Tibial artery (tissue), 4 donors: ENCODE measurements at regions of chr1 and their contacts with region 1.

Region 1: GRCh38 chr1:23098463-23099170 is 70.0 kb downstream of the LUZP1 start:
- DNase-seq: peak; percentile 49 to 72
- H3K4me3 ChIP-seq: no peak overlapping the region
- H3K27ac ChIP-seq: peak overlapping the region in 1 of 2 donors; percentile 3
- H3K4me1 ChIP-seq: peaks cover 0 to 55% (median 34%) of the 10 kb centered on the region in 4 donors
- H3K27me3 ChIP-seq: no peaks in the 10 kb centered on the region
- CTCF ChIP-seq: peak; percentile 90 to 95

Region 2: GRCh38 chr1:23184212-23184934 is 85.8 kb after region 1 on chr1:
- intact Hi-C with region 1: loop called (anchors 1 kb)
- DNase-seq: no peak
- H3K4me3 ChIP-seq: peak overlapping the region; percentile 22 to 42
- H3K27ac ChIP-seq: no peak overlapping the region
- H3K4me1 ChIP-seq: peaks cover 0 to 6% (median 4%) of the 10 kb centered on the region in 4 donors
- H3K27me3 ChIP-seq: no peaks in the 10 kb centered on the region
- CTCF ChIP-seq: peak; percentile 78 to 98